GM18951 (cell line): ENCODE measurements at regions of chr10 and their contacts with region 1.

Region 1: DNA sequence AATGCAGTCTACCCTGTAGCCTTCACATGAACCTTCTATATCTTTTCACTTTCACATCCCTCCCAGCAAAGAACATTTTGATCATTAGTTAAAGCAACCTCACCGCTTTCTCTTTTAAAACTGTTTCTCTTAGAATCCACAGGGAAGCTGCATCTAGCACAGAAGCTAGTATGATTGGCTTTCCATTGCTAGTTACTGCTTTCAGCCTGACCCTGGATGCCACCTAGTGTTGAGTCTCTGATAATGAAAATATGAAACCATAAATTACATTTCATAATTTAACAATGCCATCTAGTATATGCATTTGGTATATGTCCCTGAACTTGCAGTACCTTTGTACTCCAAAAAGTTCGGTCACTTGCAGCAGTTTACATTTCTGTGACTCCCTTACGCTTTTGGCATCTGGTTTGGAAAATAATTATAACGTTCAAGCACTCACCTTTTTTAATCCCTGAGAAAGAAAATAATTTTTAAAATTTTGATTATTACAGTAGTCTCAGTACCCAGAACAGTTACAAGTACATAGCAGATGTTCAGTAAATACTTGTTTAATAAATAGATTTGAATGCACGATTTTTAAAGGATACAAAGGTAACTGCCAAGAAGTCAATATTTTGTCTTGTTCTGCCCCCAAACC is 22.7 kb downstream of the CISD1 start:
- POLR2A ChIP-seq: no peak

Region 2: GRCh38 chr10:58173391-58173790 is 118.3 kb before region 1 on chr10:
- in situ Hi-C with region 1: loop called (anchors 5 kb)
- POLR2A ChIP-seq: no peak